Calu3 (cell line): ENCODE measurements at regions of chr4 and their contacts with region 1.

Region 1: GRCh38 chr4:75995727-75996126 is 5.0 kb upstream of the SDAD1 start:
- DNase-seq: no peak
- H3K4me3 Mint-ChIP-seq: no peak overlapping the region
- H3K27ac Mint-ChIP-seq: no peak overlapping the region
- H3K4me1 Mint-ChIP-seq: peaks cover 20% of the 10 kb centered on the region
- H3K27me3 Mint-ChIP-seq: peaks cover 13% of the 10 kb centered on the region
- CTCF ChIP-seq: no peak

Region 2: DNA sequence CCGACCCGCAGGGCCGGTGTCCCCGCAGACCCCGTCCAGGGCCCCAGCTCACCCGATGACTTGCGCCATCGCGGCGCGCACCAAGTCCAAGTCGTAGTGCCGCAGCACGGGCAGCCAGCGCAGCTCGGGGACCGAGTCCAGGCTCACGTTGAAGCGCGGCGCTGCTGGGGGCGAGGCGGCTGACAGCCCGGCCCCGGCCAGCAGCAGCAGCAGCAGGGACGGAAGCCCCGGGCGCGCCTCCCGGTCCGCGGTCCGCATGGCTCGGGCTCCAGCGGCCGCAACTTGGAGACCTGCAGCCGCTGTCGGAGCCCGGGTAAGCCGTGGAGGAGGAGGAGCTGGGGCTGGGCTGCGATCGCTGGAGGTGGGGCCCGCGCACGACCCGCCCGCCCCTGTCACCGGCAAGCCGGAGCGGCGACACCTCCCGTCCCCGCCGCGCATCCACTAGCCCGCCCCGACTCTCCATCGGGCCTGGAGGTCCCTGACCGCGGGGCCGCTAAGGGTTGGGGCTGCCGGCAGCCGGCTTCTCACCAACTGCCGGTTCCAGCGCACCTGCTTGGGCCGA is 55.0 kb before region 1 on chr4 and contains the start of gene NAAA:
- CTCF ChIA-PET with region 1: no interaction called
- intact Hi-C with region 1: no loop called
- DNase-seq: peak; percentile 71
- H3K4me3 Mint-ChIP-seq: peak within 1 kb of the TSS; percentile 79
- H3K27ac Mint-ChIP-seq: peak within 1 kb of the TSS; percentile 23
- H3K4me1 Mint-ChIP-seq: no peaks in the 10 kb centered on the region
- H3K27me3 Mint-ChIP-seq: no peaks in the 10 kb centered on the region
- CTCF ChIP-seq: no peak
- total RNA-seq, gene NAAA: 6.2 and 8.2 TPM in 2 replicates

Region 3: DNA sequence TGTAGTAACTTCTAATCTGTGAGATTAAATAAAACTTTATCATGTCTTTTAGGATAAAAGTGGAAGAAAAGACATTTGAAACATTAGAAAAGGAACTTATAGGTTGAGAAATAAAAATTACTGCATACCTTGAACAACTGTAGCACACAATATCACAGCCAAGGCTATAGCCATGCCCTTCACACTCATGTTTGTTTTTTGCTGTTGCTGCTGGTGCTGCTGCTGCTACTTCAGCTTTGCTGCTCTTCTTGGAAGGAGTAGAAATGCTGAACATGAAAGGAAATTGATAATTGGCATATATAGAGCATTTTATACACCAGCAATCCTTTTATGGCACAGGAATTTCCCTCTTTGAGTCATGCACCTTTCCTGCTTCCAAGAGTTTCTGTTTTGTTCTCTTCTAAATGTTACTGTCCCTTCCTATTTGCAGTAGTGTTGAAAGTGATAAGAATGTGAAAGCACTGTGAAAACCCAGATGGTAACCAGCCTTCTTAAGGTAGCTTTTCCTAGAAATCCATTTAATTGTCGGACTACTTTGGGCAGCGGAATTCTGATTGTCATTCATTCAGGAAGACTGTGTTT is 40.2 kb after region 1 on chr4 and contains the start of gene CXCL11:
- CTCF ChIA-PET with region 1: no interaction called
- intact Hi-C with region 1: no loop called
- DNase-seq: no peak
- H3K4me3 Mint-ChIP-seq: no peak within 1 kb of the TSS
- H3K27ac Mint-ChIP-seq: no peak within 1 kb of the TSS
- H3K4me1 Mint-ChIP-seq: no peaks in the 10 kb centered on the region
- H3K27me3 Mint-ChIP-seq: no peaks in the 10 kb centered on the region
- CTCF ChIP-seq: no peak
- total RNA-seq, gene CXCL11: 6.0 and 38.4 TPM in 2 replicates

Region 4: DNA sequence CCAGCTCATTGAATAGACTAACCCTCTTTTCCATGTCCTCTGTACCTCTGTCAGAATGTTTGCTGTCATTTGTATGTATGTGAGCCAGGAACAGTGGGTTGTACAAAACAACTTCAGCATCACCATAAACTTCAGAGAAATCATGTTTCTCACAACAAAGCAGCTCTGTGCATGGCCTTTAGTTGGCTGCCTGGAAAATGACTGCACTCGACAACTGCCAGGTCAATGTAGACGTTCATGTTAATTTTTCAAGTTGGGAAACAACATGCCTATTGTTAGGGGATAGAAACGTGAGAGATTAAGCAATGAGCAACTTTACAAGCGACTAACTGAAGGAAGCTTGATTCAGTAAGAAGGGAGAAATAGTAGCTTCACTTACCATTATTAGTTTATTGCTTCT is 58.0 kb after region 1 on chr4:
- CTCF ChIA-PET with region 1: interaction called, 11 read pairs
- intact Hi-C with region 1: no loop called
- DNase-seq: peak; percentile 2
- H3K4me3 Mint-ChIP-seq: no peak overlapping the region
- H3K27ac Mint-ChIP-seq: peak overlapping the region; percentile 31
- H3K4me1 Mint-ChIP-seq: peaks cover 16% of the 10 kb centered on the region
- H3K27me3 Mint-ChIP-seq: no peaks in the 10 kb centered on the region
- CTCF ChIP-seq: no peak

Region 5: DNA sequence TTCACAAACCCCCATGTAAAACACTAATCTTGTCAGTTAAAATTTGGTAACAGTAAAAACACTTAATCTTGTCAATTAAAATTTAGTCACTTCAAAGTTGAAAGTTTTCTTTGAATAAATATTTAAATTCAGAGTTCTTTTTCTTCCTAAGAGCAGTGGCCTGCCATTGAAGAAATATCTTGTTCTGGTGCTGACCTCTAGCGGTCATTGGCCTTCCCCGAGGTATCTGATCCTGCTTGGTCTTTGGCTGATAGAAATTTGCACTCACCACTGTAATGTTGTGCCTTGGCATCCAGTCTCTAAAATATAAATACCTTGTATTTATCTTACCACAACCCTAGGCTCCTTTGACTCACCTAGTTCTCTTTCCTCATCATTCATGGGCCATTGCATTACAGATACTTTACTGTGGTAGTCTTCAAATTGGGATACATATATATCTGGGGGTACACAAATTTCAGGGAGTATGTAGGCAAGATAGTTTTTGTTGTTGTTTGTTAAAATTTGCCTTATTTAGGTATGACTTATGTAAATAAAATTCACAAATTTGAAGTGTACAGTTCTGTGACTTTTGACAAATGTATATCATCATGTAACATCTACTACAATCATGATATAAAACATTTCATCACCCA is 72.0 kb after region 1 on chr4:
- CTCF ChIA-PET with region 1: interaction called, 4 read pairs
- intact Hi-C with region 1: loop called (anchors 1 kb)
- DNase-seq: peak; percentile 71
- H3K4me3 Mint-ChIP-seq: no peak overlapping the region
- H3K27ac Mint-ChIP-seq: no peak overlapping the region
- H3K4me1 Mint-ChIP-seq: no peaks in the 10 kb centered on the region
- H3K27me3 Mint-ChIP-seq: no peaks in the 10 kb centered on the region
- CTCF ChIP-seq: peak; percentile 59

Region 6: DNA sequence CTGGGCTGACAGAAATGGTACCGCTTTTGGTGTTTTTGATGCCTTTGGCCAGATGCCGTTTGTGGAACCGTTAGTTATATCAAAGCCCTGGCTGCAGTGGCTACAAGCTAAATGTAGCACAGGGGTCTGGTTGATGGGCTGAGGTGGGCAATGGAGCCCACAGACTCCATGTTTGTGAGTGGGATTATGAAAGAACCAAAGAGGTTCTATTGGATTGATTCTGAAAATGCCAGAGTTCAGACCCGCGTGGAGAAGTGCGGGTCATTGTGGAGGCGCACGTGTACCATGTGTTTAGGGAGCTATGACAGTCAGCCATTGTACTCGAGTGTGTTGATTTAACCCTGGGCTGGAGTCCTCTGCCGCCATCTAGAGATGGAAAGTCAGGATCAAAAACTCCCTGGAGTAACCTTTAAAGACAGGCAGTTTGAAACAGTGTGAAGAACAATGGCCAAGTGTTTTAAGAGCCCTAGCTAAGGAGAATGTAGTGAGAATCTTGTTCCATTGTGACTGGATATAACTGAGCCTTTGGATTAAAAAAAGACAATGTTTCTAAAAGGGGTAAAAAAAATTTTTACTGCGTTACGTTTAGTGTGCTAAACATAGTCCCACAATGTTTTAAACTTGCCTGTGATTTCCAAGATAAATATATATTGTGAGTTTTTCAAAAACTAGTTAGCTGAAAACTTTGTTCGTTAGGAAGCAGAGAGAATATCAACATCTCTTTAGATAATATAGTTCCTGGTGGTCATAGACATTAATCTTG is 91.5 kb after region 1 on chr4:
- CTCF ChIA-PET with region 1: interaction called, 17 read pairs
- intact Hi-C with region 1: no loop called
- DNase-seq: peak; percentile 54
- H3K4me3 Mint-ChIP-seq: no peak overlapping the region
- H3K27ac Mint-ChIP-seq: no peak overlapping the region
- H3K4me1 Mint-ChIP-seq: peaks cover 11% of the 10 kb centered on the region
- H3K27me3 Mint-ChIP-seq: no peaks in the 10 kb centered on the region
- CTCF ChIP-seq: no peak